AG04450 (cell line): ENCODE measurements at regions of chr10 and their contacts with region 1.

Region 1: DNA sequence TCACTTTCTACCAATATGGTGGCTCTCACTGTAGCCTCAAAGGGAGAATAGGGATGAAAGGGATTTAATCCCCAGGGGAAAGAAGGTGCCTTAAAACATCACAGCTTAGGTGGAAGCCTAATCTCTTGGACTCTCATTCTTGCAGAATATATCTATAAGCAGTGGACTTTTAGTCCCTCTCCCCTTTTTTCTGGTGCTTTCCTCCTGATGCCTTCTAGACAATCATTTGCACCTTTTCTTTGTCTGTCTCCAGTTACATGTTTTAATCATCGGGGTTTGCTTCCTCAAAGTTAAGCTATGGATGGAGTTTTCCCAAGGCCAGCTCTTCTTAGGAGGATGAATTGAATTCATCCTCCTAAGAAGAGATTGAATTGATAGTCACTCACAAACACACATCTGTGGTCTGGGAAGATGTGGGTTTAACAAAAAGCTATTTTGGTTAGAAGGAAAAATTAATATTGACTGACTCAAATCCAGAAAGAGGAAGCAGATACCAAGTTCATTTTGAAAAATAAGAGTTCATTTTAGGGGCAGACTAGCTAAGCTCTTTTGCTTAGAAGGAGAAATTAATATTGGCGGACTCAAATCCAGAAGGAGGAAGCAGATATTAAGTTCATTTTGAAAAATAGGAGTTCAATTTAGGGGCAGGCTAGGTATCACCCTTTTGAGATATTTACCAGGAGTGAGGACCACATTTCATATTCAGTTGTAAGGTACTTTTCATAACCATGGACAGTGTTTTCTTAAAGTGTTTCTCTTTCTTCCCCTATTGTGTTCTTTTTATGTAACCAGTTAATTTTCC is 35.2 kb upstream of the PLEKHS1 start:
- DNase-seq: no peak
- H3K4me3 ChIP-seq: no peak overlapping the region
- H3K27ac ChIP-seq: no peak overlapping the region
- H3K27me3 ChIP-seq: no peaks in the 10 kb centered on the region
- CTCF ChIP-seq: no peak

Region 2: DNA sequence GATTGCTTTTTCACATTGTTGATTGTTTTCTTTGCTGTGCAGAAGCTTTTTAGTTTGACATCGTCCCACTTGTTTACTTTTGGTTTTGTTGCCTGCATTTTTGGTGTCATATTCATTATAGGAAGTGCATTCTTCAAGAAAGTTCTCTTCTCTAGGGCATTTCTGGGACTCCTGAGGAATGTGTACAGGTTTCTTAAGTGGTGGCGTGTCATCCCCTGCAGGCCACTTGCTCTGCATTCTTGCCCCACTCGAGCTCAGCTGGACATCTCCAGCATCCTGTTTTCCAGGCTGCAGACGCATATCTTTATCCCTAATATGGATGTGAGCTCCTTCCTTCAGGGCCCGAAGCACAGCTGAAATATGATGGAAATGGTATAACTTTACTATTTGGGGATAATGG is 419.1 kb before region 1 on chr10:
- CTCF ChIA-PET with region 1: no interaction called
- POLR2A ChIA-PET with region 1: no interaction called
- DNase-seq: no peak
- H3K4me3 ChIP-seq: no peak overlapping the region
- H3K27ac ChIP-seq: no peak overlapping the region
- H3K27me3 ChIP-seq: peaks cover 2% of the 10 kb centered on the region
- CTCF ChIP-seq: no peak

Region 3: GRCh38 chr10:113454341-113455061 is 261.8 kb before region 1 on chr10:
- CTCF ChIA-PET with region 1: no interaction called
- POLR2A ChIA-PET with region 1: no interaction called
- DNase-seq: no peak
- H3K4me3 ChIP-seq: peak overlapping the region; percentile 17; the same call in 1 of the 2 replicates
- H3K27ac ChIP-seq: no peak overlapping the region
- H3K27me3 ChIP-seq: peaks cover 7% of the 10 kb centered on the region
- CTCF ChIP-seq: peak; percentile 71

Region 4: DNA sequence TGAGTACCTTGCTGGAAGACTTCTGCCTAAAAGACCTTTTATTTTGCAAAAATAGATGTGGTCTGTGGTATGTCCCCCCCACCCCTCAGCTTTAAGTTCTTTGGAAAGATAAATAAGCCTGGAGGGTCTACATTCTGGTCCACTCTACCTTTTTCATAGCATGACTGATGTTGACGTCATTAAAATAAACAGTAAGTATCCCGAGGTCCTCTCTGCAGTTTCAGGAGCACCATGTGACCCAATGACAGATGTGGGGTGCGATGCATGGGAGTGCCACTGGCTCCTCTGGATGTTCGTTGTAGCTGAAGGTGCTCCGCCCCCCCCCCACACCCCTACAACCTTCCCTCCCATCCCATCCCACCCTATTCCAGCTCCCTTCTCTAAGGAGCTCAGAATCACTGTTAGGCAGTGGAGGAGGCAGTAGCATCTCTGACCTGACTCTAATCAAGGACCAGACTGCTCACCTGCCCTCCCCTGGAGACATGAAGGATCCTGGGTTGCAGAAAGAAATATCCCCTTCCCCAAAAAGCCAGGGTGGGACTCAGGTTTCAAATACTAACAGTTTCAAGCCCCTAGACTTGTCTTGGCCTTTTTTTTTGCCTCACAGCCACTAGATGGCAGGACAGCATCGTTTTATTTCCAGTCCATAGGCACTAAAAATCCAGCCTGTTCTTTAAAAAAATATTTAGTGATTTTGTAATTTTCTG is 11.5 kb before region 1 on chr10:
- CTCF ChIA-PET with region 1: interaction called, 12 read pairs
- POLR2A ChIA-PET with region 1: no interaction called
- DNase-seq: no peak
- H3K4me3 ChIP-seq: no peak overlapping the region
- H3K27ac ChIP-seq: no peak overlapping the region
- H3K27me3 ChIP-seq: no peaks in the 10 kb centered on the region
- CTCF ChIP-seq: peak; percentile 77

Region 5: DNA sequence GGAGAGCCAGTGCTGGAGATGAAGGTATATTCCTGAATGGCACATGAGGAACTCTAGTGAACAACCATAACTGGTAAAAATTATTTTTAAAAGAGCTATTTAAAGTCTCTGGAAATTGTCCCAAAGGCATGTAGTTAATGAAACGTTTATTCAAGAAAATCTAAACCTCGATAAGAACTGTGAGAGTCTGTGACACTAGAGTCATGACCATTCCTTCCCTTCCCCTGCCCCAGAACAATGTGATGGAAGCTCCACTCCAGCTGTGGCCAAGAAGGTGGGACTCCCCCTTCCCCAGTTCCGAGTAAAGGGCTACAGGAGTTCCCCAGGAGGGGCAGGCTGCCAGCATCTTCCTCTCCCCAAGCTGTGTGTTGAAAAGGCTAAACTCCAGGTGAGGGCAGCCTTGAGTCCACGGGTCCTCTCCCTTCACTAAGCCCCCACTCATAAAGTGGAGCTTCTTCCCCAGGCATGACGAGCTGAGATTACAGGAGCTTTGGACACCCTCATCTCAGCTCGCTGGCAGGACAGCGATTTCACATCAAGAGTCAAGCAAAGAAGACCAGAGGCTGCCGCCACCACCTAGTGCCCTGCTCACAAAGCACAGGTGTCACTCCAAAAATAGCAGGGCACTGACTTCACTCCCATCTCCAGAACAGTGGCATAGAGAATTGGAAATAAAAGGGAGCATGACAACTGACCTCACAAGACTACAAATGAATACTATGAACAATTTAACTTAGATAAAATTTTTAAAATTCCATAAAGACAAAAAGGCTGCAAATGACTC is 206.7 kb after region 1 on chr10:
- CTCF ChIA-PET with region 1: no interaction called
- POLR2A ChIA-PET with region 1: no interaction called
- DNase-seq: no peak
- H3K4me3 ChIP-seq: no peak overlapping the region
- H3K27ac ChIP-seq: no peak overlapping the region
- H3K27me3 ChIP-seq: no peaks in the 10 kb centered on the region
- CTCF ChIP-seq: no peak